ENCODE measurements at regions of chr7 and their contacts with region 1.

Region 1: DNA sequence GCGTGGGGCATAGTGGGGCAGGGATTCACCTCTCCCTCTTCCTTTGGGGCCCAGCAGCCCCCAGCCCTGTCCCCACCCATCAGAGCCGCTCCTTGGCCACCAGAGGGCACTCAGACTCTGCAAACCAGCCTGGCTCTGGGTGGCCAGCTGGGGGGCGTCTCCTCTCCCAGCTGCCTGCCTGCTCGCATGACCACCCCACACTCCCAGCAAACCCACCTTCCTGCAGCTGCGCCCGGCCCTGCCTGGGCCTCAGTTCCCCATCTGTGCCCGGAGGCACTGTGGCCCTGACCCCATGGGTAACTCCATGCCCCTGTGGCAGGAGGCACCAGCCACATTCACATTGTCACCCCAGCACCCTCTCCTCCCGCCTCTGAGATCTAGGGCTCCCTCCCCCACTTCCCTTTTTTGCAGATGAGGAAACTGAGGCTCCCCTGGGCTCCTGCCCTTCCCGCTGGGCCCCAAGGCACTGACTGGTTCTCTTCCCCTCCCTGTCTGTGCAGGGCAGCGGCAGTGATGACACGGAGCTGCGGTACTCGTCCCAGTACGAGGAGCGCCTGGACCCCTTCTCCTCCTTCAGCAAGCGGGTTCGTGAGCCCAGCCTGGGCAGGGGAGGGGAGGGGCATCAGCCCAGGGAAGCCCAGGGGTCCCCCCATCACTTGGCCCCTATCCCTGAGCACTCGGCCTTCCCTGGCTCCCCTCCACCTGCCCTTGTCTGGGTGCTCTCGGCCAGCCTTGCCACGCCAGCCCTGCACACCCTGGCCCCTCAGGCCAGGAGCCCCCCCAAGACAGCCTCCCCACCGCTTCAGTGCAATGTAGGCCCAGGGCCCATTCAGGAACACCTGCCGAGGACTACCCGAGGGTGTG is 6.9 kb upstream of the SH2B2 start:
- DNase-seq: peak in 37 of 42 donors; percentile 38 to 82 (median 63)

Region 2: GRCh38 chr7:102182016-102182415 is 97.8 kb before region 1 on chr7:
- intact Hi-C with region 1: no loop called
- DNase-seq: no peak

Region 3: GRCh38 chr7:102390697-102391484 is 111.1 kb after region 1 on chr7:
- intact Hi-C with region 1: loop called (anchors 5 kb)
- DNase-seq: peak; percentile 57 to 94 (median 84)